ENCODE measurements at regions of chr7 and their contacts with region 1.

Region 1: GRCh38 chr7:30164567-30164966 is 29.8 kb downstream of the MTURN start:
- DNase-seq: no peak

Region 2: DNA sequence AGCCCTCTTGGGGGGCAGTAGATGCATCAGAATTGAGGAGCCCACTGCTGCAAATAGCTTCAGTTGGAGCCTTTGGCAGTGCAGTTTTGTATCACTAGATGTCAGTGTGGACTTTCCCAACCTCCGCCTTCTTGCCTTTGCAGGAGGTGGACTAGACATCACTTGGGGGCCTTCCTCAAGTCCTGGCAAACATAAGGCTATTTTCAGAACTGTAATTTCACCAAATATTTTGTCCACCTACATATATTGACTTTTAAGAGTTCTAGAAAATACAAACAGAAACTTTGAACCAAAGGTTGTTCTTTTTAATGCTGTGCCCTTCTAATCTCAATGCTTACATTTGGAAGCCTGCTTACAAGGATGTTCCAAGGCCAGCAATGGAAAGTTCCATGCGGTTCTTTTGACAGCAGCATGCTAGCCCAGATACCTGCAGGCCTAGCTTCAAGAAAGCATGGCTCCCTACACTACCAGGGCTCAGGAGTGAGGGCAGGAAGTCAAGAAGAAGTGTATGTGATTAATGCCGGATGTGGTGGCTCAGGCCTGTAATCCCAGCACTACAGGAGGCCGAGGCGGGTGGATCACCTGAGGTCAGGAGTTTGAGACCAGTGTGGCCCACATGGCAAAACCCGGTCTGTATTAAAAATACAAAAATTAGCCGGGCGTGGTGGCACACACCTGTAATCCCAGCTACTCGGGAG is 111.8 kb after region 1 on chr7:
- intact Hi-C with region 1: loop called (anchors 5 kb)
- DNase-seq: no peak

Measured in cardiac septum (tissue), 1 donor.